H1 (cell line): ENCODE measurements at regions of chr7 and their contacts with region 1.

Region 1: GRCh38 chr7:23696916-23697441 is 13.0 kb upstream of the STK31 start:
- DNase-seq: peak; percentile 67 to 86
- H3K4me3 ChIP-seq: no peak overlapping the region
- H3K27ac ChIP-seq: no peak overlapping the region
- H3K4me1 ChIP-seq: no peaks in the 10 kb centered on the region
- H3K27me3 ChIP-seq: no peaks in the 10 kb centered on the region
- CTCF ChIP-seq: peak; percentile 82 to 89 (median 84)
- EP300 ChIP-seq: no peak
- POLR2A ChIP-seq: no peak
- RAD21 ChIP-seq: peak; percentile 76 to 79

Region 2: DNA sequence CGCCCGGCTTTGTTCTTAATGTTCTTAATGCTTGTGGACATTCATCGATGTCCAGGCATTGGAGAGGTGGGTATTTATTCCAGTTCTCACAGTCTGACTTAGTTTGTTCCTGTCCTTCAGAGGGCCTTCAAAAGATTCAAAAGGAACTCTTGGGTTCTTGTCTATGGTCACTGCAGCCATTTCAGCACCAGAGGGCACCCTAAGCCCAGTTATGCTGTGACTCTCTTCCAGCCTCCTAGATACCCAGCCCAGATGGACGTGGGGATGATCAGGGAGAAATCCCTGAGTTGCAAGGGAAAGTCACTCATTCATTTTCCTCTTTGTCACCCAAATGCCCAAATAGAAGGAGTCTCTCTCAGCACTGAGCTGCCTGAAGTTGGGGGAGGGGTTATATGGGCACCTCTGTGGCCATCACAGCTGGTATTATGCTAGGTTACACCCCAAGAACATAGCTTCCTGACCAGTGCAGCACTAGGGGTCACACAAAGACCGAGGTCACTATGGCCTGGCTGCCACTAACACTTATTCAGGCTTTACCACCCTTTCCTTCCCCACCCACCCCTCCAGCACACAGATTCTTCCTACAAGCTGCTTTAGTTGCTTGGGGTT is 126.3 kb before region 1 on chr7:
- CTCF ChIA-PET with region 1: interaction called, 44 read pairs
- POLR2A ChIA-PET with region 1: no interaction called
- DNase-seq: peak; percentile 58 to 88
- H3K4me3 ChIP-seq: no peak overlapping the region
- H3K27ac ChIP-seq: no peak overlapping the region
- H3K4me1 ChIP-seq: no peaks in the 10 kb centered on the region
- H3K27me3 ChIP-seq: no peaks in the 10 kb centered on the region
- CTCF ChIP-seq: peak; percentile 65 to 94 (median 92)
- EP300 ChIP-seq: no peak
- POLR2A ChIP-seq: no peak
- RAD21 ChIP-seq: peak; percentile 98 to 99

Region 3: GRCh38 chr7:23628370-23628769 is 68.6 kb before region 1 on chr7:
- CTCF ChIA-PET with region 1: no interaction called
- POLR2A ChIA-PET with region 1: no interaction called
- DNase-seq: no peak
- H3K4me3 ChIP-seq: no peak overlapping the region
- H3K27ac ChIP-seq: no peak overlapping the region
- H3K4me1 ChIP-seq: no peaks in the 10 kb centered on the region
- H3K27me3 ChIP-seq: no peaks in the 10 kb centered on the region
- CTCF ChIP-seq: no peak
- EP300 ChIP-seq: no peak
- POLR2A ChIP-seq: no peak
- RAD21 ChIP-seq: no peak

Region 4: GRCh38 chr7:23654508-23654907 is 42.5 kb before region 1 on chr7:
- CTCF ChIA-PET with region 1: interaction called, 24 read pairs
- POLR2A ChIA-PET with region 1: interaction called, 3 read pairs
- DNase-seq: peak in 1 of 2 experiments; percentile 79
- H3K4me3 ChIP-seq: no peak overlapping the region
- H3K27ac ChIP-seq: no peak overlapping the region
- H3K4me1 ChIP-seq: peaks cover 0 to 2% (median 0%) of the 10 kb centered on the region in 4 experiments; a peak in 2 of 7 replicates
- H3K27me3 ChIP-seq: no peaks in the 10 kb centered on the region
- CTCF ChIP-seq: peak; percentile 3 to 79 (median 73)
- EP300 ChIP-seq: no peak
- POLR2A ChIP-seq: no peak
- RAD21 ChIP-seq: peak; percentile 96

Region 5: DNA sequence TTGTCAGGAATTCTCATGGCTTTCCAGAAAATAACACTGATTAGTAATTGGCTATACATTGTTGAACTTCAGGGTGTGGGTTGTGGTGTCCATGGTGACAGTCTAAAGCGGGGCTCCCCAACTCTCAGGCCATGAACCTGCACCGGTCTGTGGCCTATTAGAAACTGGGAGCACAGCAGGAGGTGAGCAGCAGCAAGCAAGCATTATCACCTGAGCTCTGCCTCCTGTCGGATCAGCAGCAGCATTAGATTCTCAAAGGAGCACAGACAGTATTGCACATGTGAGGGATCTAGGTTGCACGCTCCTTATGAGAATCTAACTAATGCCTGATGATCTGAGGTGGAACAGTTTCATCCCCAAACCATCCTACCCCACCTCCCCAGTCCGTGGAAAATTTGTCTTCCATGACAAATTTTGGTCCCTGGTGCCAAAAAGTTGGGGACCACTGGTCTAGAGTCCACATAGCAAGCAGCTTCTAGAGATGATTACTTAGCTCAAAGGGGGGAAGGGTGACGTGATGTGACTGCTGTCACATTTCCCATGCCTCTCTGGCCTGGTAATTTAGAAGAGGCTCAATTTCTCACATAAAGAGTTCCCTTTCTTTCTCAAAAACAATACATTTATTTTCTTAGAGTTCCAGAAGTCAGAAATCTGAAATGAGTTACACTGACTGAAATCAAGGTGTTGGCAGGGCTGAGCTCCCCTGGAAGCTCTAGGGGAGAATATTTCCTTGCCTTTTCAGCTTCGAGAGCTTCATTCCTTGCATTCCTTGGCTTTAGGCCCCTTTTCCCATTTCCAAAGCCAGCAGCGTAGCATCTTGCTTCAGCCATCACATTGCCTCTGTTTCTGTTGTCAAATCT is 34.6 kb before region 1 on chr7:
- CTCF ChIA-PET with region 1: interaction called, 11 read pairs
- POLR2A ChIA-PET with region 1: interaction called, 4 read pairs
- DNase-seq: no peak
- H3K4me3 ChIP-seq: peak overlapping the region in 1 of 4 experiments; percentile 23; a peak in 1 of 8 replicates
- H3K27ac ChIP-seq: peak overlapping the region; percentile 66; the same call in 1 of the 2 replicates
- H3K4me1 ChIP-seq: peaks cover 6 to 16% (median 12%) of the 10 kb centered on the region in 4 experiments
- H3K27me3 ChIP-seq: no peaks in the 10 kb centered on the region
- CTCF ChIP-seq: peak in 2 of 3 experiments; percentile 5 to 25; a peak in 2 of 4 replicates
- EP300 ChIP-seq: no peak
- POLR2A ChIP-seq: 0 out of 3 replicates have a peak, but pooled peaks of 1 of the 2 experiments have one; percentile 39
- RAD21 ChIP-seq: no peak

Region 6: GRCh38 chr7:23679898-23680413 is 17.0 kb before region 1 on chr7 and contains the start of gene FAM221A:
- CTCF ChIA-PET with region 1: interaction called, 37 read pairs
- POLR2A ChIA-PET with region 1: interaction called, 12 read pairs
- DNase-seq: peak; percentile 80 to 86
- H3K4me3 ChIP-seq: peak within 1 kb of the TSS; percentile 56 to 87 (median 77)
- H3K27ac ChIP-seq: peak within 1 kb of the TSS; percentile 53; the same call in 1 of the 2 replicates
- H3K4me1 ChIP-seq: peaks cover 0 to 2% (median 0%) of the 10 kb centered on the region in 4 experiments; a peak in 3 of 7 replicates
- H3K27me3 ChIP-seq: peaks cover 0 to 3% (median 2%) of the 10 kb centered on the region in 4 experiments; a peak in 2 of 7 replicates
- CTCF ChIP-seq: peak; percentile 71 to 79 (median 76)
- EP300 ChIP-seq: peak in 1 of 2 experiments; percentile 54; a peak in 1 of 3 replicates
- POLR2A ChIP-seq: peak in 1 of 2 experiments; percentile 54; a peak in 1 of 3 replicates
- RAD21 ChIP-seq: peak; percentile 22 to 35; a peak in 2 of 4 replicates
- total RNA-seq, gene FAM221A: 20.3 and 21.5 TPM in 2 replicates

Region 7: DNA sequence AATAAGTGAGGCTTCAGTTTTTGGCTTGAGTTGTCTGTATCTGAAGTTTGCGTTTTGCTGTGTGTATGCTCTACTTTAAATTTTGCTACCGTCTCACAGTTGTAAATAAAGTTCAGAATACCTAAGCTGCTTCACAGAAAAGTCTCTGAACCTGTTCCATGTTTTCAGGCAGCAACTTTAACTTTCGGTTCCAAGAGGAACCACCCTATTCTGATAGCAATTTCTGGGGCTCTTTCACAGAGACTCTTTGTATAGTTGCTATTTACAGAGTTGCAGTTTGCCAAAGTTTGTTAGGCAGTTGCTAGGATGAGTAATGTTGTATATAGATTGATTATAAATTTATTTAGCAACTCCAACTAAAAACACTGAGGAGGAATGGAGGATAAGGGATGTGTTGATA is 11.2 kb before region 1 on chr7:
- CTCF ChIA-PET with region 1: interaction called, 37 read pairs
- POLR2A ChIA-PET with region 1: interaction called, 12 read pairs
- DNase-seq: no peak
- H3K4me3 ChIP-seq: no peak overlapping the region
- H3K27ac ChIP-seq: no peak overlapping the region
- H3K4me1 ChIP-seq: peaks cover 0 to 4% (median under 1%) of the 10 kb centered on the region in 4 experiments; a peak in 4 of 7 replicates
- H3K27me3 ChIP-seq: no peaks in the 10 kb centered on the region
- CTCF ChIP-seq: no peak
- EP300 ChIP-seq: no peak
- POLR2A ChIP-seq: no peak
- RAD21 ChIP-seq: no peak

Region 8: GRCh38 chr7:23712368-23713284 is 15.6 kb after region 1 on chr7:
- CTCF ChIA-PET with region 1: interaction called, 79 read pairs
- POLR2A ChIA-PET with region 1: interaction called, 3 read pairs
- DNase-seq: no peak
- H3K4me3 ChIP-seq: no peak overlapping the region
- H3K27ac ChIP-seq: no peak overlapping the region
- H3K4me1 ChIP-seq: no peaks in the 10 kb centered on the region
- H3K27me3 ChIP-seq: no peaks in the 10 kb centered on the region
- CTCF ChIP-seq: peak in 2 of 3 experiments; percentile 39 to 66; a peak in 2 of 4 replicates
- EP300 ChIP-seq: no peak
- POLR2A ChIP-seq: no peak
- RAD21 ChIP-seq: peak; percentile 89 to 92